Mammary epithelial cell (primary cell): ENCODE measurements at regions of chr2 and their contacts with region 1.

Region 1: DNA sequence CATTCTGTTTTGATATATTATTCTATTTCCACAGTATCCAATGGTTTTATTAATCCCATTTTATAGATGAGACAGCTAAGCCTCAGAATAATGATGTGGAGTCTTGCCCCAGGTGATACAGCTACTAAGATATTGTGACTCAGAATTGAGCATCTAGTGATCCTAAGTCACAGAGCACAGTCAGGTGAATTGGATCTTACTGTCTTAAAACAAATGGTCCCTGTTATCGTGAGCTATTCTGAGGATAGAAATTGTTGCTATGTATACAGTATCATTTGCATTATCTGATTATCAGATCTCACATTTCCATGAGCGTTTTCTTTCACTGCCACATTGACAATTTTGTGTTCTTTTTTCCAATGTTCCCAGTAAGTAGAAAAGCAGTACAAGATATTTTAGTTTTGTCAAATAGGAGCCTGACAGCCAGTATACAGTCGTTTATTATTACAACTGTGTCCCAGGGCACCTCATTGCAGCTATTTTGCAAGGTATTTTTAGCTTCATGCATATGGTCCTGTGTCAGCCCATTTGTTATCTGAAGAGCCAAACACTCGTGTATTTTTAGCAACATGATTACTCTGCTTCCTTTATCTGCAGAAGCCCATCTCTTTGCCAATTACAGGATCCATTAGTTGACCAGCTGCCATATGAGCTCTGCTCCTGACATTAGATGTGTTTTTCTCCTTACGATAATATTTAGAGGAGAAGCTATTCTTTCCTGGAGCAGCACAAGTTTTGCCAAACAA is 25.1 kb upstream of the SGPP2 start:
- DNase-seq: no peak
- H3K4me3 ChIP-seq: no peak overlapping the region
- H3K27ac ChIP-seq: no peak overlapping the region
- H3K4me1 ChIP-seq: no peaks in the 10 kb centered on the region
- H3K27me3 ChIP-seq: no peaks in the 10 kb centered on the region
- CTCF ChIP-seq: no peak

Region 2: DNA sequence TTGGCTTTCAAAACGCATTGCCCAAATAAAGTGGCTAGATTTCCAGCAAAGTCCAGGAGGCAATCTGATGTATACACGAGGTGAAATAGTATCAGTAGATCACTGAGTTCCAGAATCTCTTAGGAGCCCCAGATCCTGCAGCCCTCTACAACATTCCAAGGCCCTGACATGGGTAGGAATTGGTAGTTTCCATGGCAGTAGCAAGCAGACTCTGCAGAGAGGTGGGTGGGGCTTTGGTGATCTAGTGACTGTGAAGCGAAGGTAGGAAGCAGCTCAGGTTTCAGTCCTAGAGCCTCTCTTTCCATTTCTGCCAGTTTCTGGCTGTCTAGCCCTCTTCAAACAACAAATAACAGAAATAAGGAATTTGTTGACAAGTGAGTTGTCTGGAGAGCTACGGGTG is 11.3 kb after region 1 on chr2:
- CTCF ChIA-PET with region 1: no interaction called
- dilution Hi-C with region 1: no loop called
- in situ Hi-C with region 1: no loop called
- intact Hi-C with region 1: loop called (anchors 1 kb)
- DNase-seq: peak; percentile 16
- H3K4me3 ChIP-seq: no peak overlapping the region
- H3K27ac ChIP-seq: no peak overlapping the region
- H3K4me1 ChIP-seq: no peaks in the 10 kb centered on the region
- H3K27me3 ChIP-seq: no peaks in the 10 kb centered on the region
- CTCF ChIP-seq: no peak